ENCODE measurements at regions of chr3 and their contacts with region 1.

Region 1: GRCh38 chr3:171320750-171321558 is 139.3 kb downstream of the TNIK start:
- DNase-seq: peak in 1 of 2 donors; percentile 57
- ATAC-seq: peak; percentile 91 to 95 (median 92)
- H3K4me3 ChIP-seq: no peak overlapping the region
- H3K27ac ChIP-seq: peak overlapping the region; percentile 90
- H3K4me1 ChIP-seq: peaks cover 57% of the 10 kb centered on the region
- H3K27me3 ChIP-seq: no peaks in the 10 kb centered on the region
- CTCF ChIP-seq: no peak

Region 2: DNA sequence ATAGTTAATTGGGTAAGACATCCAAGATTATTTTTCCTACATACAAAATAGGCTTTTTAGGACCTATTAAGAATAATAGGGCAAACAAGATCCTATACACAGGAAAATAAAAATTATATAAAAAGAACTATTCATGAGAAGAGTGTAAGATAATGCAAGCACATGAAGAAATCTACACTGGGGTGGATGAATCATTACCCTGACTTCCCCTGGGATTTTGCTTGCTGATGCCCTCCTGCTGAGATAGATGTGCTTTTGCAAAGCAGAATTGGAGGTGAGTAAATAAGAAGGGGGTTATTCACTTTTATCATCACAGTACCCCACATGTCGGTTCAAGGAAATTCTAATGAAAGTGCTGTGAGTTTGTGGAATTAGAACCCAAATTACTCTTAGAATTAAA is 343.0 kb before region 1 on chr3:
- intact Hi-C with region 1: no loop called
- DNase-seq: no peak
- ATAC-seq: no peak
- H3K4me3 ChIP-seq: no peak overlapping the region
- H3K27ac ChIP-seq: no peak overlapping the region
- H3K4me1 ChIP-seq: no peaks in the 10 kb centered on the region
- H3K27me3 ChIP-seq: peaks cover 0 to 5% (median 0%) of the 10 kb centered on the region in 3 donors
- CTCF ChIP-seq: no peak

Region 3: DNA sequence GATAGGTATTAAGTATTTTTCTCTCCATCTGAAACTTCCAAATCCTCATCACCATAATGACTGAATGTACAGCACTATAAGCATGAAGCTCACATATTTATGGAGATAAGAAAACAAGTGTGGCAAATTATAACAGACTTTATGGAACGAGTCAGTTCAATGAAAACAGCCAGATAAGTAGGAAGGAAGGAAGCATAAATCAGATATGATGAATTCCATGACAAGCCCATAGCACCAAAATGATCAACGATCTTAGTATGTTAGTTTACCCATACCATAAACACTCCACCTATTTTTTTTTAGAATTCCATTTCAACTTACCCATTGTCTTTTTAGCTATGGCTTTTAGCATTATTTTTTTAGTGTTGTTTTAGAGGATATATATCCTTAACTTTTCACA is 30.3 kb before region 1 on chr3:
- intact Hi-C with region 1: loop called in 1 of 2 experiments (anchors 2 kb)
- DNase-seq: no peak
- ATAC-seq: no peak
- H3K4me3 ChIP-seq: no peak overlapping the region
- H3K27ac ChIP-seq: no peak overlapping the region
- H3K4me1 ChIP-seq: peaks cover 20% of the 10 kb centered on the region
- H3K27me3 ChIP-seq: no peaks in the 10 kb centered on the region
- CTCF ChIP-seq: no peak

Region 4: GRCh38 chr3:171447338-171447760 is 126.4 kb after region 1 on chr3:
- intact Hi-C with region 1: no loop called
- DNase-seq: no peak
- ATAC-seq: peak; percentile 71 to 84 (median 82)
- H3K4me3 ChIP-seq: no peak overlapping the region
- H3K27ac ChIP-seq: no peak overlapping the region
- H3K4me1 ChIP-seq: peaks cover 44% of the 10 kb centered on the region
- H3K27me3 ChIP-seq: no peaks in the 10 kb centered on the region
- CTCF ChIP-seq: no peak

Measured in psoas muscle (tissue), 8 donors.